Posterior cingulate gyrus (tissue), 11 donors: ENCODE measurements at regions of chr14 and their contacts with region 1.

Region 1: DNA sequence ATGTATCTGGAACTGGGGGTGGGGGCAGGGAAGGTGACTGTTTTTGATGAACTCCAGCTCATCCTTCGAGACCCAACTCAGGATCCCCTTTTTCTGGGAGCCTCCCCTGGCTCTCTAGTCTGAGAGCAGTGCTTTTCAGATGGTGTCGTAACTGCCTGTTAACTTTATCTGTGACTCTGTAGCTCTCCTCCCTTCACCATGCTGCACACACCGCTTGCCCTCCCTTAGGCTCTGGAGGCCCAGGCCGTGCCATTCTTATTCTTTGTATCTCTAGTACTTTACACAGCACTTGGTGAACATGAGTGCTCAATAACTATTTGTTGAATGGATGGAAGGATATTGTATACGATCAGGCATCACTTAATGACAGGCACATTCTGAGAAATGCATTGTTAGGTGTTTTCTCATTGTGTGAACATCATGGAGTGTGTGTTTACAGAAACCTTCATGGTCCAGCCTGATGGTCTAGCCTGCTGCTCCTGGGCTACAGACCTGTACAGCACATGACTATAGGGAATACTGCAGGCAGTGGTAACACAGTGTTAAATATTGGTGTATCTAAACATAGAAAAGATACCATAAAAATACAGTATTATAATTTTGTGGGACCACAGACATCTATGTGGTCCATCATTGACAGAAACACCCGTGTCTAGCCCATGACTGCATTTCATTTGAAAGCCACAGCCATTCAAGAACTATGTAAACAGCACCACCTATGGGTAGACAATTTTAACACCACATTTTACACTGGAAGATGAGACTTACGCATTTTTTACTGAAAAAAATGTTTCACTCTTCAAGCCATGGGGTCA is 91.8 kb downstream of the EML1 start:
- DNase-seq: no peak

Region 2: GRCh38 chr14:99683619-99684355 is 201.3 kb before region 1 on chr14 and contains the start of gene CYP46A1:
- intact Hi-C with region 1: loop called (anchors 2 kb)
- DNase-seq: peak; percentile 99 to 100 (median 100)

Region 3: GRCh38 chr14:99729991-99730868 is 154.8 kb before region 1 on chr14:
- intact Hi-C with region 1: loop called (anchors 1 kb)
- DNase-seq: peak; percentile 58 to 95 (median 78)

Region 4: GRCh38 chr14:99831903-99832685 is 52.9 kb before region 1 on chr14:
- intact Hi-C with region 1: no loop called
- DNase-seq: no peak